Natural killer cell (primary cell): ENCODE measurements at regions of chr19 and their contacts with region 1.

Region 1: GRCh38 chr19:54882758-54883157 is 8.7 kb downstream of the FCAR start:
- DNase-seq: peak; percentile 21 to 50
- ATAC-seq: peak; percentile 86 to 89 (median 86)
- H3K4me3 ChIP-seq: no peak overlapping the region
- H3K4me3 Mint-ChIP-seq: peak overlapping the region; percentile 75
- H3K27ac ChIP-seq: peak overlapping the region; percentile 80
- H3K27ac Mint-ChIP-seq: peak overlapping the region; percentile 71 to 86
- H3K4me1 ChIP-seq: peaks cover 32% of the 10 kb centered on the region
- H3K4me1 Mint-ChIP-seq: peaks cover 17 to 18% of the 10 kb centered on the region in 2 donors
- H3K27me3 ChIP-seq: peaks cover 5% of the 10 kb centered on the region
- H3K27me3 Mint-ChIP-seq: peaks cover 4 to 9% of the 10 kb centered on the region in 2 donors
- CTCF ChIP-seq: peak; percentile 50

Region 2: DNA sequence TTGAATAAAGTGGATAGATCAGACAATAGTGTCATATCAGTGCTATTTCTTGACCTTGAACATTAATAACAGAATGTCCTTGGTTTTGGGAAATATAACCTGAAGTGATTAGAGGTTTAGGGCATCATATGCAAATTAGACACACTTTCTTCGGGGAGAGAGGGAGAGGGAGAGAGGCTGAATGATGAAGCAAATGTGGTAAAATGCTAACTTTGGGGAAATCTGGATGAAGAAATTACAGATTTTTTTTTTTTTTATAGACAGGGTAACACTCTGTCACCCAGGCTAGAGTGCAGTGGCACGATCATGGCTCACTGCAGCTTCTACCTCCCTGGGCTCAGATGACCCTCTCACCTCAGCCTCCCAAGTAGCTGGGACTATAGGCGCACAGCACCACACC is 19.3 kb after region 1 on chr19:
- intact Hi-C with region 1: no loop called
- DNase-seq: no peak
- ATAC-seq: no peak
- H3K4me3 ChIP-seq: no peak overlapping the region
- H3K4me3 Mint-ChIP-seq: no peak overlapping the region
- H3K27ac ChIP-seq: no peak overlapping the region
- H3K27ac Mint-ChIP-seq: peak overlapping the region; percentile 61 to 72
- H3K4me1 ChIP-seq: peaks cover 45% of the 10 kb centered on the region
- H3K4me1 Mint-ChIP-seq: peaks cover 54 to 76% of the 10 kb centered on the region in 2 donors
- H3K27me3 ChIP-seq: no peaks in the 10 kb centered on the region
- H3K27me3 Mint-ChIP-seq: peaks cover 0 to 5% of the 10 kb centered on the region in 2 donors
- CTCF ChIP-seq: no peak

Region 3: GRCh38 chr19:54916822-54917221 is 34.1 kb after region 1 on chr19:
- intact Hi-C with region 1: loop called (anchors 1 kb)
- DNase-seq: peak; percentile 24 to 38
- ATAC-seq: peak; percentile 58 to 78 (median 68)
- H3K4me3 ChIP-seq: no peak overlapping the region
- H3K4me3 Mint-ChIP-seq: peak overlapping the region; percentile 89
- H3K27ac ChIP-seq: peak overlapping the region; percentile 61
- H3K27ac Mint-ChIP-seq: peak overlapping the region; percentile 83 to 87
- H3K4me1 ChIP-seq: peaks cover 65% of the 10 kb centered on the region
- H3K4me1 Mint-ChIP-seq: peaks cover 48 to 70% of the 10 kb centered on the region in 2 donors
- H3K27me3 ChIP-seq: no peaks in the 10 kb centered on the region
- H3K27me3 Mint-ChIP-seq: no peaks in the 10 kb centered on the region
- CTCF ChIP-seq: no peak

Region 4: GRCh38 chr19:55014717-55015116 is 132.0 kb after region 1 on chr19:
- intact Hi-C with region 1: loop called (anchors 10 kb)
- DNase-seq: peak in 1 of 2 donors; percentile 19
- ATAC-seq: peak; percentile 8 to 77 (median 64)
- H3K4me3 ChIP-seq: peak overlapping the region; percentile 39
- H3K4me3 Mint-ChIP-seq: peak overlapping the region; percentile 64
- H3K27ac ChIP-seq: peak overlapping the region; percentile 65
- H3K27ac Mint-ChIP-seq: peak overlapping the region; percentile 50
- H3K4me1 ChIP-seq: no peaks in the 10 kb centered on the region
- H3K4me1 Mint-ChIP-seq: peaks cover 38 to 44% of the 10 kb centered on the region in 2 donors
- H3K27me3 ChIP-seq: no peaks in the 10 kb centered on the region
- H3K27me3 Mint-ChIP-seq: no peaks in the 10 kb centered on the region
- CTCF ChIP-seq: no peak

Region 5: GRCh38 chr19:55160128-55160985 is 277.6 kb after region 1 on chr19:
- intact Hi-C with region 1: loop called (anchors 2 kb)
- DNase-seq: peak; percentile 87 to 92
- ATAC-seq: peak; percentile 97
- H3K4me3 ChIP-seq: no peak overlapping the region
- H3K4me3 Mint-ChIP-seq: peak overlapping the region; percentile 42
- H3K27ac ChIP-seq: no peak overlapping the region
- H3K27ac Mint-ChIP-seq: peak overlapping the region in 1 of 2 donors; percentile 45
- H3K4me1 ChIP-seq: peaks cover 22% of the 10 kb centered on the region
- H3K4me1 Mint-ChIP-seq: peaks cover 0 to 18% of the 10 kb centered on the region in 2 donors
- H3K27me3 ChIP-seq: peaks cover 30% of the 10 kb centered on the region
- H3K27me3 Mint-ChIP-seq: peaks cover 12 to 29% of the 10 kb centered on the region in 2 donors
- CTCF ChIP-seq: peak; percentile 89